AG04450 (cell line): ENCODE measurements at regions of chr1 and their contacts with region 1.

Region 1: GRCh38 chr1:183124259-183124658 is 61.8 kb upstream of the LAMC2 start:
- DNase-seq: no peak
- H3K4me3 ChIP-seq: no peak overlapping the region
- H3K27ac ChIP-seq: no peak overlapping the region
- H3K27me3 ChIP-seq: no peaks in the 10 kb centered on the region
- CTCF ChIP-seq: no peak

Region 2: DNA sequence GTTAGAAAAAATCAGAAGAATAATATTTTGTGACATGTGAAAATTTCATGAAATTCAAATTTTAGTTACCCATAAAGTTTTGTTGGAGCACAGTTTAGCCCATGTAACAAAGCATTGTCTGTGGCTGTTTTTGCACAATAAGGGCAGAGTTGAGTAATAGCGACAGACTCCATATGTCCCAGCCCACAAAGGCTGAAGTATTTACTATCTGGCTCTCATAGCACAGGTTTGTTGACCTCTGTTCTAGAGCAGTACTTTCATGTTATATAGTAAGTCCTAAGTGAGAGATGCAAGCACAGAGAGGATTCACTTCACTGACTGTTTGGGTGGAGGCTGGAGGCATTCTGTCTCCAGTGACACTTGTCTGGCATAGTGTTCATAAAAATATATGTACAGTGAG is 94.2 kb before region 1 on chr1:
- CTCF ChIA-PET with region 1: no interaction called
- POLR2A ChIA-PET with region 1: no interaction called
- DNase-seq: no peak
- H3K4me3 ChIP-seq: no peak overlapping the region
- H3K27ac ChIP-seq: no peak overlapping the region
- H3K27me3 ChIP-seq: no peaks in the 10 kb centered on the region
- CTCF ChIP-seq: no peak

Region 3: DNA sequence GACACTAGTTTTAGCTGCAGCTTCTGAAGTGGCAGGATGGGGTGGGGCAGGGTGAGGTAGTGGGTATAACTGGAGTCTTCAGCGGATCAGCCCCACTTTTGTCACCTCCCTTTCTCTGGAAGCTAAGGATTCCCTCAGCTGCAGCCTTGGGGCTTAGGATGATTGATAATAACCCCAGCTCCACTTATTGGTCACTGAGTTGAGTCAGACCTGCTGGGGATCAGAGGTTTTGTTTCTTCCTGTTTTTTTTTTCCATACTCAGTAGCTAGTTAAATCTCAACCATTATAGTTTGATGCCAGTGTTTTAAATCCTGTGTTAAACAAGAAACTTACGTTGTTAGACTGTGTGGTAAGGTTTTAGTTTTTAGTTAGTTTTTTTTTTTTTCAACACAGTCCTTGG is 43.9 kb before region 1 on chr1:
- CTCF ChIA-PET with region 1: no interaction called
- POLR2A ChIA-PET with region 1: interaction called, 10 read pairs
- DNase-seq: no peak
- H3K4me3 ChIP-seq: no peak overlapping the region
- H3K27ac ChIP-seq: no peak overlapping the region
- H3K27me3 ChIP-seq: no peaks in the 10 kb centered on the region
- CTCF ChIP-seq: no peak